ENCODE measurements at regions of chr17 and their contacts with region 1.

Region 1: DNA sequence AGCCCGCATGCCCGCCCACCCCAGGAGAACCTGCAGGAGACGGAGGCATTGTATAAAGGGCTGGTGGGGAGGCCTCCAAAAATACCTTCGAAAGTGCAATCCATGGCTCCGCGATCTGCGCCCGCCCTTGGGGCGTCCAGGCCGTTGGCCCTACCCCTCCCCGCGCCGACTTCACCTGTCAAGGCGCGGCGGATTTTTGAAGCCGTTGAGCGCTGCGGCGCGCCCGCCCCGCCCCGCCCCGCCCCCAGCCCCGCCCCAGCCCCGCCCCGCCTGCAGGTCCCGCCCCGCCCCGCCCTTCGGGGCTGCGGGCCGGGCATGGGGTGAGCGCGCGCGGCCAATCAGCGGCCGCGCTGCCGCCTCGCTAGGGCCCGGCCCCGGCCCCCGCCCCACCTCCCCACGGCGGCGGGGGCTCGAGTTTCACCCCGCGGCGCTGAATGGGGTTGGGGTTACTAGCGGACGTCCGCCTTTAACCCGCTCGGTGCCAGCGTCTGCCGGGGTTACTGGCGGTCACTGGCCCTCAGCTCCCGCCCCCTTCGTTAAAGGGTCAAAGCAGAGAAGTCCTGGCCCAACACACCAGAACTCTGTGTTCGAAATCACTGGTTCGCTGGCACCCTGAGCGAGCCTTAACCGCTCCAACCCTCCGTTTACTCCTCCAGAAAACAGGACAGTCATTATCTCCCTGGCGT is 13.2 kb downstream of the SREBF1 start:
- DNase-seq: peak; percentile 86
- ATAC-seq: peak; percentile 93
- H3K4me3 ChIP-seq: peak overlapping the region; percentile 35 to 82 (median 56)
- H3K4me3 Mint-ChIP-seq: peak overlapping the region; percentile 86
- H3K27ac ChIP-seq: peak overlapping the region; percentile 16 to 56
- H3K27ac Mint-ChIP-seq: peak overlapping the region; percentile 67
- H3K4me1 ChIP-seq: peaks cover 28 to 41% of the 10 kb centered on the region in 2 donors
- H3K4me1 Mint-ChIP-seq: peaks cover 52% of the 10 kb centered on the region
- H3K27me3 ChIP-seq: no peaks in the 10 kb centered on the region
- H3K27me3 Mint-ChIP-seq: no peaks in the 10 kb centered on the region
- CTCF ChIP-seq: no peak

Region 2: GRCh38 chr17:17836250-17836817 is 12.8 kb after region 1 on chr17:
- CTCF ChIA-PET with region 1: interaction called, 8 read pairs
- POLR2A ChIA-PET with region 1: interaction called, 3 read pairs
- intact Hi-C with region 1: loop called (anchors 1 kb)
- DNase-seq: peak; percentile 98
- ATAC-seq: peak; percentile 69
- H3K4me3 ChIP-seq: peak overlapping the region; percentile 23 to 91 (median 89)
- H3K4me3 Mint-ChIP-seq: peak overlapping the region; percentile 88
- H3K27ac ChIP-seq: peak overlapping the region; percentile 93 to 97
- H3K27ac Mint-ChIP-seq: peak overlapping the region; percentile 91
- H3K4me1 ChIP-seq: peaks cover 45 to 64% of the 10 kb centered on the region in 2 donors
- H3K4me1 Mint-ChIP-seq: peaks cover 61% of the 10 kb centered on the region
- H3K27me3 ChIP-seq: no peaks in the 10 kb centered on the region
- H3K27me3 Mint-ChIP-seq: no peaks in the 10 kb centered on the region
- CTCF ChIP-seq: no peak

Region 3: DNA sequence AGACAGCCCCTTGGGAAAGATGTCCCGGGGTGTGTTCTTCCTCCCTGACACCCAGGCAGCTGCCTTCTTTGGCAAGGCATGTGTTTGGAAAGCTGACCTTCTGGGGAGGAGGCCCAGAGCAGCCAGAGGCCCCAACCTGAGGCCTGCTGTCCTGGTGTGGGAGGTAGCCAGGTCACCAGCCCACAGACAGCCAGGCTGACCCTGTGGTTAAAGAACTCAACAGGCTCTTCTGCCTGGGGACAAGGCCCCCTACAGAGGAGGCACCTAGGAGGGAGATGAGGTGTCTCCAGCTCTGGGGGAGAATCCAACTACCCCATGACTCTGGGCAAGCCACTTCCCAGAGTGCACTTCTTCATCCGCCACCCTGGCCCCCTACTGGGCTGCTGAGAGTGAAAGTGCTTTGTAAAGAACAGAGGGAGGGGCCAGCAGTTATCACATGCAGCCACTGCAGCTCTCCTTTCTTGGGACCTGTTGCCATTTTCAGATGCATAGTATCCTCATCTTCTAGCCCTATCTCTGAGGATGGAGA is 26.3 kb after region 1 on chr17:
- CTCF ChIA-PET with region 1: no interaction called
- POLR2A ChIA-PET with region 1: no interaction called
- intact Hi-C with region 1: loop called (anchors 1 kb)
- DNase-seq: peak; percentile 72
- ATAC-seq: peak; percentile 88
- H3K4me3 ChIP-seq: no peak overlapping the region
- H3K4me3 Mint-ChIP-seq: no peak overlapping the region
- H3K27ac ChIP-seq: peak overlapping the region; percentile 30 to 37
- H3K27ac Mint-ChIP-seq: no peak overlapping the region
- H3K4me1 ChIP-seq: peaks cover 24 to 31% of the 10 kb centered on the region in 2 donors
- H3K4me1 Mint-ChIP-seq: peaks cover 33% of the 10 kb centered on the region
- H3K27me3 ChIP-seq: no peaks in the 10 kb centered on the region
- H3K27me3 Mint-ChIP-seq: no peaks in the 10 kb centered on the region
- CTCF ChIP-seq: peak; percentile 39

Region 4: GRCh38 chr17:17890773-17891759 is 67.5 kb after region 1 on chr17:
- CTCF ChIA-PET with region 1: no interaction called
- POLR2A ChIA-PET with region 1: no interaction called
- intact Hi-C with region 1: no loop called
- DNase-seq: peak; percentile 23
- ATAC-seq: no peak
- H3K4me3 ChIP-seq: no peak overlapping the region
- H3K4me3 Mint-ChIP-seq: no peak overlapping the region
- H3K27ac ChIP-seq: no peak overlapping the region
- H3K27ac Mint-ChIP-seq: no peak overlapping the region
- H3K4me1 ChIP-seq: peaks cover 0 to 9% of the 10 kb centered on the region in 2 donors
- H3K4me1 Mint-ChIP-seq: peaks cover 9% of the 10 kb centered on the region
- H3K27me3 ChIP-seq: no peaks in the 10 kb centered on the region
- H3K27me3 Mint-ChIP-seq: no peaks in the 10 kb centered on the region
- CTCF ChIP-seq: no peak

Measured in B cell (primary cell).